HEK293 (cell line): ENCODE measurements at regions of chr5 and their contacts with region 1.

Region 1: DNA sequence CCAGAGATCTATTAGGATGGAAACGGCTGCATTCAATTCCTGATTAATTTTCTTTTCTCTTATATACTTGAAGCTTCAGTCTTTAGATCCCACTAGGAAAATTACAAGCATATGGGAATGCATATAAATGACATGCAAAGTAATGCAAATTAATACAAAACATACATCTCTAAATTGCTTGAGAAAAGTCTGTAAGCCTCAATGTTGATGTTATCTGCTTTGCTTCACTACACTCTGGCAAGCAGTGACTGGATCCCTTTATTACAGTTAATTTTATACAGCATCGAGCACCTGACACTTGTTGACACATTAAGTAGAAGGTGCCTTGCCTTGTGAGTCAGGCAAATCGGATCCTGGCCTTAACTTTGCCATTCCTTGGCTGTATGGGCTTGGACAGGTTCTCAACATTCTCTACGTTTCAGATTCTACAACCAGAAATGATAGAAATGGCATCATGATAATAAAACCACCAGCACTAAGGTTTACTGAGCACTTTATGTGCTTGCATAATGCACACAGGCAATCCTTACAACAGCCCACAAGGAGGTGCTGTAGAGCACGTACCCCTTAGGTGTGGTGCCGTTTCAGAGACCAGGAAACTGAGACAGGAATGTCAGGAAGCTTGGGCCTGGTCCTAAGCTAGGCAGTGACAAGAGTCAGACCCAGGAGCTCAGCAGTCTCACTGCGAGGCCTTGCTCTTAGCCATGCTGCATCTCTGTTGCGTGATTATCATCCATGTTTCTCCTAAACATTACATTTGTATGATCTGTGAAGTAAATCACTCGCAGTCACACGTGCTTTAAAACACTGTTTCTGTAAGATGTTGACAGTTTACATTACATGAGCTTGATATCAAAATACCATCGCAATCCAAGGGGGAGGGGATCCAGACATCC is 2.7 kb downstream of the GCNT4 start:
- H3K4me3 ChIP-seq: no peak overlapping the region
- H3K27ac ChIP-seq: no peak overlapping the region
- H3K4me1 ChIP-seq: peaks cover 7% of the 10 kb centered on the region
- CTCF ChIP-seq: peak; percentile 33; the same call in 1 of the 2 replicates

Region 2: GRCh38 chr5:75016896-75017295 is 32.8 kb before region 1 on chr5:
- CTCF ChIA-PET with region 1: no interaction called
- POLR2A ChIA-PET with region 1: no interaction called
- H3K4me3 ChIP-seq: no peak overlapping the region
- H3K27ac ChIP-seq: no peak overlapping the region
- H3K4me1 ChIP-seq: no peaks in the 10 kb centered on the region
- CTCF ChIP-seq: no peak

Region 3: GRCh38 chr5:75028090-75028489 is 21.6 kb before region 1 on chr5:
- CTCF ChIA-PET with region 1: interaction called, 11 read pairs
- POLR2A ChIA-PET with region 1: no interaction called
- H3K4me3 ChIP-seq: no peak overlapping the region
- H3K27ac ChIP-seq: no peak overlapping the region
- H3K4me1 ChIP-seq: no peaks in the 10 kb centered on the region
- CTCF ChIP-seq: no peak

Region 4: DNA sequence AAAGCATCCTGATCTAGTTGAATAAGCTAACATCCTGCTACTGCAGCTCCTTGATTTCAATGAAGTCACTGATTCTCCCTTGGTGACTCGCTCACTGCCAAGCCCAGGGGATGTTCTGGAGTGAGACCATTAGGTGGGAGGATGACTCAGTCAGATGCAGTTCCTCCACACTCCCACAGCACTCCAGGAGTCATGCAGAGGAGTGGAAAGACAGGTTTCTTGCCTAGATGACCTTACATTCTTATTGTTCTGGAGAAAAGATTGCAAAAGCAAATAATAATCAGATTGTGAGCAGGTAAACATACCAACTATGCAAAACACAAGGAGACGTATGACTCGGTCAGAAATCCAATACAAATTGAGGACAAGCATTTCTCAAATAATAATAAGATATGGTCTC is 12.6 kb before region 1 on chr5:
- CTCF ChIA-PET with region 1: interaction called, 11 read pairs
- POLR2A ChIA-PET with region 1: no interaction called
- H3K4me3 ChIP-seq: no peak overlapping the region
- H3K27ac ChIP-seq: no peak overlapping the region
- H3K4me1 ChIP-seq: no peaks in the 10 kb centered on the region
- CTCF ChIP-seq: no peak

Region 5: DNA sequence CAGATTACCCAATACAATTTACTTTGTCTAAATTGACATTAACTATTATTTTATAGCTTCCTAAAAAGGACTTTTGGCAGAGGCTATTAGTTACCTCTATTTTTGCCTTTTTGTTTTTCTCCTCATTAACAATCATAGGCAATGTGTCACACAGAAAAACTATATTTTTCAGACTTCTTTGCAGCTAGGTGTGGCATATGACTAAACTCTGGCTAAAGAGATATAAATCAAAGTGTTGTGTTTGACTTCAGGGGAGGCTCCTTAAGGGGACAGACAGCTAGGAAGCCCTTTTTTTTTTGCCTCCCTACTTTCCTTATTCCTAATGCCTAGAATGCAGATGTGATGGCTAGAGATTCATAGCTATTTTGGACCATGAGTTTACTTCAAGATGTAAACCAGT is 22.4 kb after region 1 on chr5:
- CTCF ChIA-PET with region 1: interaction called, 16 read pairs
- POLR2A ChIA-PET with region 1: no interaction called
- H3K4me3 ChIP-seq: no peak overlapping the region
- H3K27ac ChIP-seq: no peak overlapping the region
- H3K4me1 ChIP-seq: no peaks in the 10 kb centered on the region
- CTCF ChIP-seq: no peak